Dorsolateral prefrontal cortex (tissue), 120 donors: ENCODE measurements at regions of chr3 and their contacts with region 1.

Region 1: DNA sequence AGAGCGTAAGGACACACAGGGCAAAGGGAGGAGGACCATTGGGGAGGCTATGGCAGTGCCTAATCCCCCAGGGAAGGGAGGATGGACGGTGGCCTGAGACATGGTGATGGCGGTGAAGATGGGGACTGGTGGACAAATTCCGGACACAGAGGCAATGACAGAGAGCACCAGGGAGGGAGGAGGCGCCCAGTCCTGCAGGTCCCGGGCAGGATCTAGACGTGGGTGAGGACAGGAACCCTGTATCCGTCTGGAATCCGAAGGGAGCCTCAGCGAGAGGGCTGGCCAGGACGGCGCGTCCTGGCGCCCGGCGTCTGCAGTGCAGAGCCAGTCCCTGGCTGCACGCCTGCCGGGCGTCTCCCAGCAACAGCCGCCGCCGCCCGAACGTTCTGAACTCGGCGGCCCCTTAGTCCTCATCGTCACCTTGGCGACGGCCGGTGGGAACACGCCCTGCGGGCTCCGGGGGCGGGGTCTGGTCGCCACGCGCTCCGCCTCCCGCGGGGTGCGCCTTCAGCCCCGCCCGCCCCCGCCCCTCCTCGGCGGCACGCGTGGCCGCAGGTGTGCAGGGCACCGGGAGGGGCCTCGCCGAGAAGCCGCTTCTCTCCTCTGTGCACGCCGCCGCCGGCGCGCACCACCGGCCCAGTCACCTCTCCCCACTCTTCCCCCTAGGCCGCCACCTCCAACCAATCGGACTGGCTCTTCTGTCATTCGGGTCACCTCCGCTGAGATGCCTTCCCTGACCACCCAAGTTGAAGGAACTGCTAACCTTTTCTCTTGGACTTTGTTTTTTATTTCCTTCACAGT is 11.6 kb downstream of the XIRP1 start:
- DNase-seq: peak in 9 of 10 donors; percentile 40 to 81 (median 72)
- H3K4me3 ChIP-seq: peak overlapping the region; percentile 15 to 64 (median 49)
- H3K27ac ChIP-seq: peak overlapping the region in 56 of 59 donors; percentile 1 to 98 (median 77)
- H3K27me3 ChIP-seq: no peaks in the 10 kb centered on the region
- CTCF ChIP-seq: peak in 12 of 56 donors; percentile 9 to 24 (median 13)

Region 2: DNA sequence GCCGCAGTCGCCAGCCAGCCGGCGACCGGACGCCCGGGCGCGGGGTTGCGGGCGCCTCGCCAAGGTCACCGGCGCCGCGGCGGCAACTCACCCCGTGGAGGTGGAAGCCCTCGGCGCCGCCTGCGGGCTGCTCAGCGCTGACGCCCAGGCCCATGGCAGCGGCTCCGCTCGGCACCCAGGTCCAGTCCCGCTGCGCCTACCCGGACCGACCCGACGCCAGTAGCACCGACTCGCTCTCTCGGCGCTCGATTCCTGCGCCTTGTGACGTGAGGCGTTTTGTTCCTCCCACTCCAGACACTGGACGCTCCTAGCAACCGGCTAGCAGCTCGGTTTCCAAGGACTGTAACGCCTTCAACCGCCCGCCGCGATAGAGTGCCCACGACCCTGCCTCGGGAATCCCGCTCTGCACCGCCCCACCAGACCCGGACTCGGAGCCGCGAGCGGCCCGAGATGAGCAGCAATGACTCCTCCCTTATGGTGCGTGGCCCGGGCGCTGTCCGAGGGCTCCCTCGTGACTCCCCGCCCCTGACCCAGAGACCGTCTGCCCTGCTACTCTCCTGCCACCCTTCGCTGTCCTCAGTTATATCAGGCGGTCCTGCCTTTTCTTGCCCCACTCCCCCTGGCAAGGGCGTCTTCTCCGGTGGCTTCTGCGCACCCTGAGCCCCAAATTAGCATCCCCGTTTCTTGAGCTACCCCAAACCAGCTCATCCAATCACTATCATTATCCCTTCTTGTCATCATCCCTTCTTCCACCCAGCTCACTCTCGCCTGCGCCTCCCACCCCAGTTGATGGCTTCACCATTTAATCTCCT is 73.2 kb before region 1 on chr3 and contains the starts of genes GORASP1 and TTC21A:
- intact Hi-C with region 1: loop called (anchors 5 to 10 kb)
- DNase-seq: peak; percentile 86 to 96 (median 94)
- H3K4me3 ChIP-seq: peak within 1 kb of the TSS; percentile 61 to 99 (median 92)
- H3K27ac ChIP-seq: peak within 1 kb of the TSS; percentile 4 to 97 (median 90)
- H3K27me3 ChIP-seq: no peaks in the 10 kb centered on the region
- CTCF ChIP-seq: peak in 24 of 56 donors; percentile 11 to 50 (median 18)
- total RNA-seq, gene GORASP1: 52.3 to 94.4 (median 70.3) TPM
- total RNA-seq, gene TTC21A: 12.8 to 44.7 (median 24.4) TPM

Region 3: DNA sequence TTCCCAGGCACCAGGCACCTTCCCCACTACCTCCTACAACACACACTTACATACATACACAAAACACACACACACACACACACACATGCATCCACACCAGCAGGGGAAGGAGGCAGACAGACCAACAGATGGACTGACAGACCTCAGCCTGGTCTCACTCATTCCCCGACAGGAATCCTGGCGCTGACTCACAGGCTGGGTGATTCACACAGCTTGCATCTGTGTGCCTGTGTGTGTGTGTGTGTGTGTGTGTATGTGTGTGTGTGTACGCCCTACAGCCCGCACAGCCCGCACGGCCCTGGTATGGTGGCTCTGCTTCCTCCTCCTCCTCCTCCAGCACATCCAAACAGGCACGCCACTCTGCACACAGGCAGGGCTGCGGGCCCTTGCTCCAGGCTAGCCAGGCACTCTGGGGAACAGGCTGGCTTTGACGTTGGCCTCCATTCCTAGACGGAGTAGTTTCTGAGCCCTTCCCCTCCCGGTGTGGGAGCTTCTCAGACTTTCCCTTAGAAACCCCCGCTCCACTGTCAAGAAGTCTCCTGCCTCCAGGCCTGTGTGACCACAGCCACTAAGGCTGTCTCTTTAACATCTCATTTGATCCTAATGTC is 33.7 kb before region 1 on chr3:
- intact Hi-C with region 1: loop called in 1 of 2 experiments (anchors 2 kb)
- DNase-seq: peak; percentile 38 to 92 (median 80)
- H3K4me3 ChIP-seq: peak overlapping the region in 31 of 59 donors; percentile 2 to 99 (median 25)
- H3K27ac ChIP-seq: peak overlapping the region in 58 of 59 donors; percentile 43 to 100 (median 97)
- H3K27me3 ChIP-seq: no peaks in the 10 kb centered on the region
- CTCF ChIP-seq: no peak

Region 4: GRCh38 chr3:39315420-39315819 is 134.7 kb after region 1 on chr3:
- intact Hi-C with region 1: no loop called
- DNase-seq: no peak
- H3K4me3 ChIP-seq: no peak overlapping the region
- H3K27ac ChIP-seq: no peak overlapping the region
- H3K27me3 ChIP-seq: no peaks in the 10 kb centered on the region
- CTCF ChIP-seq: no peak